Motor neuron (in vitro differentiated cells): ENCODE measurements at regions of chr11 and their contacts with region 1.

Region 1: DNA sequence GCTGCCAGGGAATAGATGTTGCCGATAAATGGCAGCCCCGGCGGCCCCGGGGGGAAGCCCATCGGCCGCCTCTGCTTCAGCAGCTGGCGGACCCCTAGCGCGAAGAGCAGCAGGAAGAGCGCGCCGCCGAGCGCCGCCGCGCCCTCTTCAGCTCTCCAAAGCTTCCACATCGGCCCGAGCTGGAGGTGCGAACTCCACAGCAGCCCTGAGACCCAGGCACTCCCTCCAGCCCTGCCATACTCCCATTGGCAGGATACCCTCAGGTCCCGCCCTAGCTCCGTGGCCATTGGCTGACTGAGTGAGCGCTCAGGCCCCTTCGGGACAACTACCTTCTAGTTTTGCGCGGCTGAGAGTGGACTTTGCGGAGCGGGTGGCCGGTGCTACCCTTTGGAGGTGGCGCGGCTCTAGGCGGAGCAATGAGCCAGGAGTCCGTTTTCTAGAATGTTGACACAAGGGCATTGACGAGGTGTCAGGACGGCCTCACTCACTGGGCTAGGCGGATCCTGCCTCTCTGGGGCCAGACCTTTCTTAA is at the start of gene CYP2R1:
- ATAC-seq: peak; percentile 88 to 96 (median 92)
- H3K4me3 ChIP-seq: peak within 1 kb of the TSS; percentile 43 to 66 (median 55)
- H3K27ac ChIP-seq: peak within 1 kb of the TSS; percentile 77 to 80
- H3K4me1 ChIP-seq: peaks cover 30 to 39% of the 10 kb centered on the region in 2 donors
- total RNA-seq, gene CYP2R1: 5.4 to 46.6 (median 16.4) TPM

Region 2: DNA sequence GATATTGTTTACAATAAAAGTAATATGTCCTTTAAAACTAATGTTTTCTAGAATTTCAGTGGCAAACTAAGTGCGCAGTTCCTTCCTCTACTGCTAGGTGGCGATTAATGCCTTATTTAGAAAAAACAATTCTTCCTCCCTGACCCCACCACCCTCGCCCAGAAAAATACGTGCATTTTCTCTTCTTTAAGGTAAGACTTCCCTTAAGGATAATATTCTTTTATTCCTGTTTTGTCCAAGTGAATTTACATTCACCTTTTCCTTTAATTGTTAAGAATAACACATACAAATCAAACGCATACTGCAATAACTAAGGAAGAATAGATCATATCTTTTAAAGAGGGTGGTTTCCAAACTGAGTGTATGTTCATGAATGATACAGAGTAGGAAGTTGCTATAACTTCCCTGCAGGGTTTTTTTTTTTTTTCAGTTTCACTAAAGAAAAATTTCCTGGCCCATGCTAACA is 354.9 kb before region 1 on chr11:
- in situ Hi-C with region 1: loop called in 1 of 9 experiments (anchors 25 kb)
- ATAC-seq: peak in 3 of 8 experiments; percentile 6 to 15 (median 7)
- H3K4me3 ChIP-seq: no peak overlapping the region
- H3K27ac ChIP-seq: no peak overlapping the region
- H3K4me1 ChIP-seq: no peaks in the 10 kb centered on the region

Region 3: DNA sequence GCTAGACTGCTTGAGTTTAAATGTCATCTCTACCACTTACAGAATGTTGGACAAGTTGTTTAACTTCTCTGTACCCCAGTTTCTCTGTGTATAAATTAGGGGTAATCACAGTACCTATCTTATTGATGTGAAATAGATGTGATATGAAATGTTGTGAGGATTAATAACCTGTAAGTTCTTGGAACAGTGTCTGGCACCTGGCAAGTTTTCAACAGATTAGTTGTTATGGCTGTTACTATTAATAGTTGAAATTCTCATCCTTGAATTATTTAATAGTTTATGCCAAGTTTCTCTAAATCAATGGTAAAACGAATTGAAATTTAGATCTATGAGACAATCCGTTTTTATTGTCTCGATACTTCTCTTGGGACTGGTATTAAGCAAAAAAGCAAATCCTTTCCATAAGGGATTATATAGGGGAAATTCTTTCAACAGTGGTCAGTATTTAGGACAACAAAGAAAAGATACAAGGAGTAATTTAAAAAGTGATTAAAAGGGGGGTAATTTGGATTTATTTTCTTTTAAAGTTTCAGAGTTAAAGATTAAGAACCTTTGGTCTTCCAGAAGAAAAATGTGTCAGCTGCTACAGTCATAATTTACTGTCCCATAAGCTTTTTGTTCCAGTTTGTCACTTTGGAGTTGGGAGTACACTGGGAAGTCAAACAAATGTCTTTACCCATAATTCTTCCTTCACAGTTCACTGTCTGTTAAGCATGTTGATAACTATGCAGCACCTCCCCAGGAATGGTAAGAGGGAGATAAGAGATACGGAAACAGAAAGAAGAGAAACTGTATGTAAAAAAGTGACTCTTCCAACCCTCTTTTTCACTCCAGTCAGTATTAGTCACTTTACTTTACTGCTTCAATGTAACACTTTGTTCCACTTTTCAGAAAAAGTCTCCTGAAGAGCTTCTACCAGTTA is 235.3 kb before region 1 on chr11:
- in situ Hi-C with region 1: no loop called
- ATAC-seq: peak in 2 of 8 experiments; percentile 29 to 32
- H3K4me3 ChIP-seq: no peak overlapping the region
- H3K27ac ChIP-seq: no peak overlapping the region
- H3K4me1 ChIP-seq: no peaks in the 10 kb centered on the region

Region 4: GRCh38 chr11:14789879-14790484 is 102.1 kb before region 1 on chr11:
- in situ Hi-C with region 1: loop called in 1 of 9 experiments (anchors 25 kb)
- ATAC-seq: peak in 1 of 8 experiments; percentile 40
- H3K4me3 ChIP-seq: no peak overlapping the region
- H3K27ac ChIP-seq: no peak overlapping the region
- H3K4me1 ChIP-seq: peaks cover 3 to 4% of the 10 kb centered on the region in 2 donors